GM12878 (cell line): ENCODE measurements at regions of chr2 and their contacts with region 1.

Region 1: GRCh38 chr2:161946489-161947107 is 127.4 kb downstream of the DPP4 start:
- DNase-seq: no peak
- ATAC-seq: peak; percentile 60
- H3K4me3 ChIP-seq: no peak overlapping the region
- H3K27ac ChIP-seq: no peak overlapping the region
- H3K4me1 ChIP-seq: no peaks in the 10 kb centered on the region
- H3K27me3 ChIP-seq: no peaks in the 10 kb centered on the region
- CTCF ChIP-seq: peak; percentile 33 to 48 (median 36); a peak in 3 of 6 replicates
- EP300 ChIP-seq: no peak
- POLR2A ChIP-seq: no peak
- RAD21 ChIP-seq: peak; percentile 76

Region 2: DNA sequence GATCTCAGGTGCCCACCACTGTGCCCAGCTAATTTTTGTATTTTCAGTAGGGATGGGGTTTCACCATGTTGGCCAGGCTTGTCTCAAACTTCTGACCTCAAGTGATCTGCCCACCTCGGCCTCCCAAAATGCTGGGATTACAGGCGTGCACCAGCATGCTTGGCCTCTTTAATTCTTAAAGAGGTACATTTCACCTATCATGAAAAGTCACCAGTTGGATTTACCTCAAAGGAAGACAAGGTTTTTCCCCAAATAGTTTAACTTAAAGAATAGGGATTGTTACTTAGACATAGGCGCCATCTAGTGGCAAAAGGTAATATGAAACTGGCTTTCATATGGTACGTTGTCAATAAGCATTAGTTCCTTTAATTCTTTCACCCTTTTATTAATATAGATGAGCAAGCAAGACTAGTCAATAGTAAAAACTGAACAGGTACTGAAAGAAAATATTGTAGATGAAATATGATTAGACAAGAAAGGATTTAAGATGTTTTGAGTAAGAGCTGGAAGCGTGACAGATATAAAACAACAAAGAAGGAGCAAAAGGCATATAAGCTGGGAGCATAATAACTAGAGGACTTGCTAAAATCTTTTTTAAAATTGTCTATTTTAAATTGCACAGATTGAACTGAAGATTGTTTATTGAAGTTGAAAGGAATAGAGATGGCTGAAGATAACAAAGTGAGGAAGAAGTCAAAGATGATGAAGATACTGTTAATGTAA is 673.4 kb before region 1 on chr2:
- CTCF ChIA-PET with region 1: no interaction called
- POLR2A ChIA-PET with region 1: no interaction called
- RAD21 ChIA-PET with region 1: no interaction called
- SMC1A ChIA-PET with region 1: interaction called, 5 read pairs
- in situ Hi-C with region 1: loop called (anchors 25 kb)
- intact Hi-C with region 1: no loop called
- DNase-seq: peak; percentile 23
- ATAC-seq: peak; percentile 90
- H3K4me3 ChIP-seq: no peak overlapping the region
- H3K27ac ChIP-seq: no peak overlapping the region
- H3K4me1 ChIP-seq: no peaks in the 10 kb centered on the region
- H3K27me3 ChIP-seq: no peaks in the 10 kb centered on the region
- CTCF ChIP-seq: peak; percentile 45 to 66 (median 57); a peak in 5 of 6 replicates
- EP300 ChIP-seq: no peak
- POLR2A ChIP-seq: no peak
- RAD21 ChIP-seq: peak; percentile 82

Region 3: GRCh38 chr2:161570424-161571050 is 376.1 kb before region 1 on chr2:
- CTCF ChIA-PET with region 1: interaction called, 11 read pairs
- POLR2A ChIA-PET with region 1: no interaction called
- RAD21 ChIA-PET with region 1: interaction called, 4 read pairs
- SMC1A ChIA-PET with region 1: interaction called, 3 read pairs
- in situ Hi-C with region 1: no loop called
- intact Hi-C with region 1: no loop called
- DNase-seq: no peak
- ATAC-seq: peak; percentile 74
- H3K4me3 ChIP-seq: no peak overlapping the region
- H3K27ac ChIP-seq: no peak overlapping the region
- H3K4me1 ChIP-seq: no peaks in the 10 kb centered on the region
- H3K27me3 ChIP-seq: no peaks in the 10 kb centered on the region
- CTCF ChIP-seq: peak; percentile 13 to 37 (median 32); a peak in 5 of 6 replicates
- EP300 ChIP-seq: no peak
- POLR2A ChIP-seq: no peak
- RAD21 ChIP-seq: no peak

Region 4: GRCh38 chr2:161592713-161593112 is 353.9 kb before region 1 on chr2:
- CTCF ChIA-PET with region 1: interaction called, 215 read pairs
- POLR2A ChIA-PET with region 1: no interaction called
- RAD21 ChIA-PET with region 1: interaction called, 102 read pairs
- SMC1A ChIA-PET with region 1: interaction called, 122 read pairs
- in situ Hi-C with region 1: loop called (anchors 5 kb)
- intact Hi-C with region 1: no loop called
- DNase-seq: no peak
- ATAC-seq: no peak
- H3K4me3 ChIP-seq: no peak overlapping the region
- H3K27ac ChIP-seq: no peak overlapping the region
- H3K4me1 ChIP-seq: no peaks in the 10 kb centered on the region
- H3K27me3 ChIP-seq: no peaks in the 10 kb centered on the region
- CTCF ChIP-seq: no peak
- EP300 ChIP-seq: no peak
- POLR2A ChIP-seq: no peak
- RAD21 ChIP-seq: no peak

Region 5: GRCh38 chr2:161808564-161808963 is 138.0 kb before region 1 on chr2:
- CTCF ChIA-PET with region 1: interaction called, 4 read pairs
- POLR2A ChIA-PET with region 1: no interaction called
- RAD21 ChIA-PET with region 1: no interaction called
- SMC1A ChIA-PET with region 1: interaction called, 10 read pairs
- in situ Hi-C with region 1: no loop called
- intact Hi-C with region 1: no loop called
- DNase-seq: no peak
- ATAC-seq: no peak
- H3K4me3 ChIP-seq: no peak overlapping the region
- H3K27ac ChIP-seq: no peak overlapping the region
- H3K4me1 ChIP-seq: no peaks in the 10 kb centered on the region
- H3K27me3 ChIP-seq: no peaks in the 10 kb centered on the region
- CTCF ChIP-seq: no peak
- EP300 ChIP-seq: no peak
- POLR2A ChIP-seq: no peak
- RAD21 ChIP-seq: no peak

Region 6: DNA sequence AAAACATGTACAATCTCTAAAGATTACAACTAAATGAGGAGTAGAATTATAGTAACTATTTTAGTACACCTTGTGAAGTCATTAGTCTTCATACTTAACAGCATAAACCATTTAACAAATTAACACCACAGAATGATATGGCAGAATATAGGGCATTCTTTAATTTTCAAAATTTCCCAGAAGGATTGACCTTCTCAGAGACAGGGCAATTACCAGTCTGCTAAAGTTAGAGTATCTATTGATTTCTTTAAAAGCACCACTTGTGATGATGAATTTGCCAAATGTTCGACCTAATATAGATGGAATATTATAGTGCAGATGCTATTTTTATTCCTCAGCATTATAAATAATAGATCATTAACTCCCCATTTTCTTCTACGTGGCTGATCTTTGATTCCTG is 65.1 kb before region 1 on chr2:
- CTCF ChIA-PET with region 1: no interaction called
- POLR2A ChIA-PET with region 1: no interaction called
- RAD21 ChIA-PET with region 1: no interaction called
- SMC1A ChIA-PET with region 1: no interaction called
- in situ Hi-C with region 1: no loop called
- intact Hi-C with region 1: no loop called
- DNase-seq: no peak
- ATAC-seq: no peak
- H3K4me3 ChIP-seq: no peak overlapping the region
- H3K27ac ChIP-seq: no peak overlapping the region
- H3K4me1 ChIP-seq: no peaks in the 10 kb centered on the region
- H3K27me3 ChIP-seq: no peaks in the 10 kb centered on the region
- CTCF ChIP-seq: no peak
- EP300 ChIP-seq: no peak
- POLR2A ChIP-seq: no peak
- RAD21 ChIP-seq: no peak